ENCODE measurements at regions of chr20 and their contacts with region 1.

Region 1: DNA sequence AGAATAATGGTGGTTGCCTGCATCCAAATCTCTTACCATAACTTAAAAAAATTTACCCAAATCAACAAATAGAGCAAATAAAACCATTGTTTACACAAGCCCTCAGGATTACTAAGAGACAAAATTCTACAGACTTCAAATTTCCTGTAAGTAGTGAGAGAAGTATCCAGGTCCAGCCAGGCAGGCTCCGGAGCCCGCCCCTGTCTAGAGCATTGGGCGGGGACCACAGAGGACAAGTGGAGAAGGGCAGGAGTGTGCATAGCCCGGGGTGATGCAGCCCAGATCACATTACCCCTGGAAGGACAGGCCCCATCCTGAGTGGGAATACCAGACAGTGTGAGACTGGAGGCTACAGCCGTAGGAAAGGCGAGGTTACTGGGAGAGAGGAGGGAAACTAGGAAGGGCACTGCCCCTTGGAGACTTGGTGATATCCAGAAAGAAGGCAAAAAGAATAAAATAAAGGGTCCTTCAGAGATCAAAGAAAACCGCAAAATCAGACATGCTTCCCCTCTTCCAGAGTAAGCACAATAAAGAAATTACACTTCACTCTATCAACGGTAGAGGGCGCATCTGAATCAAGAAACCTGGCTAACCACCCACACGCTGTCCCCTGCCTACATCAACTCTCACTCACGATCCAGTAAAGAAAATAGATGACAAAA is 26.6 kb downstream of the RIN2 start:
- DNase-seq: no peak

Region 2: DNA sequence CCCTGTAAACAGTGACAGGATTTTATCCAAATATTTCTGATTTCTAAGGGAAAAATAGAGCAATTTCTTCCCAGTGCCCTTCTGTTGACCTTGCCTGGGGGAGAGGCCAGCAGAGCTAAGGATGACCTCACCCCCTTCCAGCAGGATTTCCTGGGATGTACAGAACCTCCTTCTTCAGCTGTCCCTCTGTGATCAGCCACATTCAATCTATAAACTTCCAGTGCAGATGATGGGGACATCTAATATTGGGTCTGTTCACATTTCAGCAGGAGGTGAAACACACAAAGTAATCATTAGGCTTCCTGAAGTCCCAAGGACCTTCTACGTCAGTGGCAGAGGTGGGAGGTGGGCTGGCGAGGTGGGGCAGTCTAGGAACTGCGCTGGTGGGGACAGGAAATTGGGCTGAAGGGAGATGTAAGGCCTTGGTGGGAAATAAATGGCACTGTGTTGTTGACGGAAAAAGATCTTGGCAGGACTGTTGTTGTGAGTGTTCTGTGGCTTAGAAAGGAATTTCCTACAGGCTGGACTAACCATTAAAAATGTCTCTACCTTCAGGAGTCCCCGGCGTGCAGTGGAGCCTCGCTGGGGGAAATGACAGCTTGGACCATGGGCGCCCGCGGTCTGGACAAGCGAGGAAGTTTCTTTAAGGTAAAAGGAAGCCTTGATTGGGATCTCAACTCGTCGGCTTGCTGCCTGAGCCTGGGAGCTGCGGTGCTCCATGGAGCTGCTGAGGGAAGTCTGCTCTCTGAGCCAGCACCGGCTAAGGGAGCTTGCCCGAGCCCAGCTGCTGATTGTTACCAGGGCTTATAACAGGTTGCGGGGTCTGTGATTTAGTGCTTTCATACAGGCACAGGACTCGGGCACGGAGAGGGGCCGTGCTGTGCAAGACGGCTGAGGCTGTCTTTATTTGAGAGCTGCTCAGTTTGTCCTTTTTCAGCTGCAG is 104.6 kb after region 1 on chr20:
- intact Hi-C with region 1: loop called in 1 of 2 experiments (anchors 10 kb)
- DNase-seq: no peak

Region 3: GRCh38 chr20:19981031-19981451 is 196.4 kb after region 1 on chr20:
- intact Hi-C with region 1: loop called in 1 of 2 experiments (anchors 2 kb)
- DNase-seq: no peak

Region 4: GRCh38 chr20:20624914-20625313 is 840.3 kb after region 1 on chr20:
- intact Hi-C with region 1: no loop called
- DNase-seq: no peak